ENCODE measurements at regions of chr7 and their contacts with region 1.

Region 1: GRCh38 chr7:149872419-149873073 is 1.2 kb upstream of the ATP6V0E2 start:
- DNase-seq: no peak
- H3K4me3 Mint-ChIP-seq: peak overlapping the region; percentile 74
- H3K27ac Mint-ChIP-seq: peak overlapping the region; percentile 76
- H3K4me1 Mint-ChIP-seq: peaks cover 78% of the 10 kb centered on the region
- H3K27me3 Mint-ChIP-seq: no peaks in the 10 kb centered on the region

Region 2: DNA sequence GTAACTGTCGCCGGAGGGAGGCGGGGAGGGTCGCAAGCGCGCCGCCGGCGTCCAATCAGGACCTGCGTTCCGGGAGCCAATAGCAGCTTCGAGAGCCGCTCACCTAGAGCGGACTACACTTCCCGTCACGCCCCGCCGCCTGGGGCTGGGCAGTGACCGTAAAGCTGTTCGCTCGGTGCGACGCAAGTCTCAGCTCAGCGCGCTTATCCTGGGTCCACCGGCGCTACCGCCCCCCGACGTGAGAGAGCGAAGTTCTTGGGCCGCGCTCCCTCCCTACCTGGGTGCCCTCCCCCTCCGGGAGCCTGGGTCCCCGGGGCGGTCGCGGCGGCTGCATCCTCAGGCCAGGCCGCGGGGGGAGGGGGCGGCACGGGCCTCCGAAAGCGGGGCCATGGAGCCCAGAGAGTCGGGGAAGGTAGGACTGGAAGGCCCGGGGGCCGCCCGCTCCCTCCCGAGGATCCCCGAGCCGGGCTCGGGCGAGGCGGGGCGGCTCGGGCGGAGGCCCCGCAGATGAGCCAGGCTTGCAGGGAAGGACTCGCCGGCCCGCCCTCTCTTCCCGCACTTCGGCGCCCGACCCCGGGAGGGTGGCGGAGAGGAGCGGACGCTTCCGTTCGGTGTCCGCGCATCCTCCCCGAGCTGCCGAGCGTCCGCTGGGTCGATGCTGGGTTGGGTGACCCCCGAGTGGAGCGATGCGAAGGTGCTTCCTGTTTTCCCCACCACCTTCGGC is 34.2 kb before region 1 on chr7 and contains the start of gene ZNF862:
- CTCF ChIA-PET with region 1: interaction called, 6 read pairs
- POLR2A ChIA-PET with region 1: interaction called, 49 read pairs
- DNase-seq: peak; percentile 97
- H3K4me3 Mint-ChIP-seq: peak within 1 kb of the TSS; percentile 86
- H3K27ac Mint-ChIP-seq: peak within 1 kb of the TSS; percentile 78
- H3K4me1 Mint-ChIP-seq: peaks cover 23% of the 10 kb centered on the region
- H3K27me3 Mint-ChIP-seq: peaks cover 15% of the 10 kb centered on the region
- total RNA-seq, gene ZNF862: 31.4 to 32.5 TPM

Region 3: DNA sequence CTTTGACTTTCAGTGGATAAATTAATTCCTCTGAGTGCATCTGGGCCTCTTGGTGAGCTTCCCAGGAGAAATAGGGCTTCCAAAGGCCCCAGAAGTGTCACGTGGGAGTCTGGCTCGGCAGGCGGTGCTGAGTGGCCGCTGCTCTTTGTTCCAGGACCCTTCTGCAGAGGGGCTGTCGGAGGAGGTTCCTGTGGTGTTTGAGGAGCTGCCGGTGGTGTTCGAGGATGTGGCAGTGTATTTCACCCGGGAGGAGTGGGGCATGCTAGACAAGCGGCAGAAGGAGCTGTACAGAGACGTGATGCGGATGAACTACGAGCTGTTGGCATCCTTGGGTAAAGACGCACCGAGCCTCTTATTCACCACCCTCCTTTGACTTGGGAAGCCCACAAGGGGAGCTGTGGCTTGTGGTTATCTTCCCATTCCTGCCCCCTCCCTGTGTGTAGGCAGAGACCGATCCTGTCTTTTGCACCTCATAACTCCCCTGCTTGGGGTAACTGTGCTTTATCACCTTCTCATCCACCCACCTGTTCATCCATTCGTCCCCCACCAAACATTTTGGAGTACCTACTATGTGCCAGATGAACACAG is 22.4 kb before region 1 on chr7:
- CTCF ChIA-PET with region 1: interaction called, 5 read pairs
- POLR2A ChIA-PET with region 1: interaction called, 10 read pairs
- DNase-seq: no peak
- H3K4me3 Mint-ChIP-seq: no peak overlapping the region
- H3K27ac Mint-ChIP-seq: no peak overlapping the region
- H3K4me1 Mint-ChIP-seq: peaks cover 11% of the 10 kb centered on the region
- H3K27me3 Mint-ChIP-seq: no peaks in the 10 kb centered on the region

Region 4: DNA sequence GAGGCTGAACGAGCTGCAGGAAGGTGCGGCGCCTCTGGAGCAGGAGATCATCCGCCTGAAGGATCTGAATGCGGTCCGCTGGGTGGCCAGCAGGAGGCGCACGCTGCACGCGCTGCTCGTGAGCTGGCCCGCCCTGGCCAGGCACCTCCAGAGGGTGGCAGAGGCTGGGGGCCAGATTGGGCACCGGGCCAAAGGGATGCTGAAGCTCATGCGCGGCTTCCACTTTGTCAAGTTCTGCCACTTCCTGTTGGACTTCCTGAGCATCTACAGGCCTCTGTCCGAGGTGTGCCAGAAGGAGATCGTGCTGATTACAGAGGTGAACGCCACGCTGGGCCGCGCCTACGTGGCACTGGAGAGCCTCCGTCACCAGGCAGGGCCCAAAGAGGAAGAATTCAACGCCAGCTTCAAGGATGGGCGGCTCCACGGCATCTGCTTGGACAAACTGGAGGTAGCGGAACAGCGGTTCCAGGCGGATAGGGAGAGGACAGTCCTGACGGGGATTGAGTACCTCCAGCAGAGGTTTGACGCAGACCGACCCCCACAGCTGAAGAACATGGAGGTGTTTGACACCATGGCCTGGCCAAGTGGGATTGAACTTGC is 11.0 kb before region 1 on chr7:
- CTCF ChIA-PET with region 1: interaction called, 22 read pairs
- POLR2A ChIA-PET with region 1: interaction called, 4 read pairs
- DNase-seq: no peak
- H3K4me3 Mint-ChIP-seq: no peak overlapping the region
- H3K27ac Mint-ChIP-seq: no peak overlapping the region
- H3K4me1 Mint-ChIP-seq: peaks cover 55% of the 10 kb centered on the region
- H3K27me3 Mint-ChIP-seq: no peaks in the 10 kb centered on the region

Region 5: GRCh38 chr7:149883452-149883861 is 10.9 kb after region 1 on chr7:
- CTCF ChIA-PET with region 1: interaction called, 17 read pairs
- POLR2A ChIA-PET with region 1: interaction called, 8 read pairs
- DNase-seq: peak; percentile 68
- H3K4me3 Mint-ChIP-seq: no peak overlapping the region
- H3K27ac Mint-ChIP-seq: no peak overlapping the region
- H3K4me1 Mint-ChIP-seq: peaks cover 13% of the 10 kb centered on the region
- H3K27me3 Mint-ChIP-seq: no peaks in the 10 kb centered on the region

Measured in activated CD4-positive, alpha-beta memory T cell treated with anti-CD3 and anti-CD28 coated beads, Interleukin-2, amount 10 ng/mL, durations not matched to agents 7 days and 5 days (primary cell).